A549 (cell line): ENCODE measurements at regions of chr20 and their contacts with region 1.

Region 1: DNA sequence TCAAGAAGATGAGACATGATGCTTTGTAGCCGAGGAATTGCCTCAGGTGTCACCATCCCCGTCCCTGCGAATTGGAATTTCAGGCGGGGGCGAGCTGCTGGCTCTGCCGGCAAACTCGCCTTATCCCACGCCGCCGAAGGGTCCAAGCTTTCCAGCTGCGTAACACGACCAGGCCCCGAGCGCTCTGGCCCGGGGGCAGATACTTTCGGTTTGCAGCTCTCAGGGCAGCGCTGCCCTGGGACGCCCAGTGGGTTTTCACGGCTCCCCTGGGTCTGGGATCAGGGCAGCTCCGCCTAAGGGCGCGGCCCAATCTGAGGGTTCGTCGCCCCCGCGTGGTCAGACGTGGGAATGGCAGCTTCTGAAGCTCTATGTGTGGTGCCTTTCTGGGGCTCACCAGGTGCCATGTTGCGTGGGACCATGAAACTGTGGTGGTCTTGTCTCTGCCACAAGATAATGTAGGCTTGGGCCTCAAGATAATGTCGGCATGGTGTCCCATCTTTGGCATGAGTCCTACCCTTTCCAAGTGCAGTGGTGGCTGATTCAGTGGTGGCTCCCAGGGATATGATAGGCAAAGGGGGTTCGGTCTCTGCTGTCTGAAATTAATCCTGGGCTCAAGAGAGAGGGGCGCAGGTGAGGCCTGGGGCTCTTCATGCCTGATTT is 20.9 kb downstream of the PIGT start:
- DNase-seq: peak; percentile 77 to 90
- ATAC-seq: peak; percentile 98 to 99
- H3K4me3 ChIP-seq: peak overlapping the region; percentile 58
- H3K27ac ChIP-seq: peak overlapping the region; percentile 72 to 85
- H3K4me1 ChIP-seq: peaks cover 3% of the 10 kb centered on the region; the same call in 1 of the 3 replicates
- CTCF ChIP-seq: peak; percentile 92
- EP300 ChIP-seq: no peak
- POLR2A ChIP-seq: no peak
- RAD21 ChIP-seq: peak; percentile 91 to 96

Region 2: GRCh38 chr20:45229264-45230056 is 207.4 kb before region 1 on chr20:
- CTCF ChIA-PET with region 1: no interaction called
- POLR2A ChIA-PET with region 1: no interaction called
- DNase-seq: peak in 1 of 2 experiments; percentile 54
- ATAC-seq: peak; percentile 47 to 73; a peak in 3 of 6 replicates
- H3K4me3 ChIP-seq: peak overlapping the region; percentile 12; the same call in 1 of the 3 replicates
- H3K27ac ChIP-seq: no peak overlapping the region
- H3K4me1 ChIP-seq: no peaks in the 10 kb centered on the region
- CTCF ChIP-seq: peak; percentile 35; the same call in 2 of the 3 replicates
- EP300 ChIP-seq: no peak
- POLR2A ChIP-seq: no peak
- RAD21 ChIP-seq: peak; percentile 28 to 60; a peak in 2 of 5 replicates

Region 3: GRCh38 chr20:45337367-45338120 is 99.3 kb before region 1 on chr20:
- CTCF ChIA-PET with region 1: interaction called, 25 read pairs
- POLR2A ChIA-PET with region 1: no interaction called
- DNase-seq: peak in 1 of 2 experiments; percentile 59
- ATAC-seq: peak; percentile 41 to 63
- H3K4me3 ChIP-seq: peak overlapping the region; percentile 0; the same call in 1 of the 3 replicates
- H3K27ac ChIP-seq: peak overlapping the region; percentile 84 to 96
- H3K4me1 ChIP-seq: peaks cover 75% of the 10 kb centered on the region
- CTCF ChIP-seq: no peak
- EP300 ChIP-seq: 0 out of 5 replicates have a peak, but pooled peaks of 1 of the 2 experiments have one; percentile 21
- POLR2A ChIP-seq: no peak
- RAD21 ChIP-seq: no peak

Region 4: GRCh38 chr20:45362804-45363610 is 73.9 kb before region 1 on chr20 and contains the start of gene SYS1:
- CTCF ChIA-PET with region 1: interaction called, 240 read pairs
- POLR2A ChIA-PET with region 1: interaction called, 13 read pairs
- DNase-seq: peak; percentile 95 to 98
- ATAC-seq: peak; percentile 94 to 95
- H3K4me3 ChIP-seq: peak within 1 kb of the TSS; percentile 64
- H3K27ac ChIP-seq: peak within 1 kb of the TSS; percentile 95 to 97
- H3K4me1 ChIP-seq: peaks cover 27% of the 10 kb centered on the region; the same call in 2 of the 3 replicates
- CTCF ChIP-seq: peak; percentile 92
- EP300 ChIP-seq: no peak
- POLR2A ChIP-seq: peak; percentile 69
- RAD21 ChIP-seq: peak; percentile 85 to 87
- polyA plus RNA-seq, gene SYS1: 27.6 and 30.5 TPM in 2 replicates

Region 5: GRCh38 chr20:45392733-45393132 is 44.1 kb before region 1 on chr20:
- CTCF ChIA-PET with region 1: interaction called, 32 read pairs
- POLR2A ChIA-PET with region 1: no interaction called
- DNase-seq: no peak
- ATAC-seq: no peak; a peak in 1 of 6 replicates
- H3K4me3 ChIP-seq: no peak overlapping the region
- H3K27ac ChIP-seq: no peak overlapping the region
- H3K4me1 ChIP-seq: no peaks in the 10 kb centered on the region
- CTCF ChIP-seq: peak; percentile 21; the same call in 1 of the 3 replicates
- EP300 ChIP-seq: no peak
- POLR2A ChIP-seq: no peak
- RAD21 ChIP-seq: 0 out of 5 replicates have a peak, but pooled peaks have one; percentile 13 to 20

Region 6: DNA sequence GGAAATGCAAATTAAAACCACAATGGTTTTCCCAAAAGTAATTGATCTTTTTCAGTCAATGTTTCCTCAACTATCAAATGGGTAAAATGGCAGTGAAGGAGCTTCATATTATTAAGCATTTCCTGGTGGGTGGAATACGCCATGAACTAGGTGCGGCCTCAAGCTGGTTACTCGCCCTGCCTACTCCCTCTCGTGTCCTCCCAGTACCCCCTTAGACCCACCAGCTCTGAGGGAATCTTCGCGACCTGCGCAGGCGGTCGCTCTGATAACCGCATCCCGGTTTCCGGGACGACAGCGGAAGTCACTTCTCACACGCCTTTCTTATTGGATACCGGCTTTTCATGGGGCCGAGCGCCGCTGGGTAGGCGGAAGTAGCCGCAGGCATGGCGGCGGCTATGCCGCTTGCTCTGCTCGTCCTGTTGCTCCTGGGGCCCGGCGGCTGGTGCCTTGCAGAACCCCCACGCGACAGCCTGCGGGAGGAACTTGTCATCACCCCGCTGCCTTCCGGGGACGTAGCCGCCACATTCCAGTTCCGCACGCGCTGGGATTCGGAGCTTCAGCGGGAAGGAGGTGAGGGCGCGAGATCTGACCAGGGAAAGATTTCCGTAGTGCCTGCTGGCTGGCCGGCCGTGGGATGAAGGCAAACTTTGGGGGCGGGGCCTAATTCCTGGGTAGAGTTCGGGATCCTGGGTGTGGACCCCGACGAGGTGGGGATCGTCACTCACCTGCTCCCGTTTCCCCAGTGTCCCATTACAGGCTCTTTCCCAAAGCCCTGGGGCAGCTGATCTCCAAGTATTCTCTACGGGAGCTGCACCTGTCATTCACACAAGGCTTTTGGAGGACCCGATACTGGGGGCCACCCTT is 20.9 kb before region 1 on chr20 and contains the start of gene PIGT:
- CTCF ChIA-PET with region 1: interaction called, 70 read pairs
- POLR2A ChIA-PET with region 1: interaction called, 4 read pairs
- DNase-seq: peak; percentile 81 to 84
- ATAC-seq: peak; percentile 84 to 93
- H3K4me3 ChIP-seq: peak within 1 kb of the TSS; percentile 92
- H3K27ac ChIP-seq: peak within 1 kb of the TSS; percentile 91
- H3K4me1 ChIP-seq: peaks cover 39% of the 10 kb centered on the region
- CTCF ChIP-seq: no peak
- EP300 ChIP-seq: no peak
- POLR2A ChIP-seq: peak; percentile 93
- RAD21 ChIP-seq: no peak
- polyA plus RNA-seq, gene PIGT: 60.3 and 79.6 TPM in 2 replicates

Region 7: GRCh38 chr20:45456632-45457031 is 19.8 kb after region 1 on chr20:
- CTCF ChIA-PET with region 1: interaction called, 19 read pairs
- POLR2A ChIA-PET with region 1: no interaction called
- DNase-seq: peak in 1 of 2 experiments; percentile 42
- ATAC-seq: peak; percentile 60 to 78; a peak in 4 of 6 replicates
- H3K4me3 ChIP-seq: no peak overlapping the region
- H3K27ac ChIP-seq: no peak overlapping the region
- H3K4me1 ChIP-seq: no peaks in the 10 kb centered on the region
- CTCF ChIP-seq: peak; percentile 22; the same call in 2 of the 3 replicates
- EP300 ChIP-seq: no peak
- POLR2A ChIP-seq: no peak
- RAD21 ChIP-seq: peak in 1 of 2 experiments; percentile 17; a peak in 1 of 5 replicates